ENCODE measurements at regions of chr2 and their contacts with region 1.

Region 1: GRCh38 chr2:54115284-54116137 is at the start of gene ACYP2:
- DNase-seq: peak; percentile 88
- H3K4me3 Mint-ChIP-seq: peak within 1 kb of the TSS; percentile 92
- H3K27ac Mint-ChIP-seq: peak within 1 kb of the TSS; percentile 97
- H3K4me1 Mint-ChIP-seq: peaks cover 14% of the 10 kb centered on the region
- H3K27me3 Mint-ChIP-seq: peaks cover 7% of the 10 kb centered on the region
- total RNA-seq, gene ACYP2: 5.2 and 5.9 TPM in 2 replicates

Region 2: DNA sequence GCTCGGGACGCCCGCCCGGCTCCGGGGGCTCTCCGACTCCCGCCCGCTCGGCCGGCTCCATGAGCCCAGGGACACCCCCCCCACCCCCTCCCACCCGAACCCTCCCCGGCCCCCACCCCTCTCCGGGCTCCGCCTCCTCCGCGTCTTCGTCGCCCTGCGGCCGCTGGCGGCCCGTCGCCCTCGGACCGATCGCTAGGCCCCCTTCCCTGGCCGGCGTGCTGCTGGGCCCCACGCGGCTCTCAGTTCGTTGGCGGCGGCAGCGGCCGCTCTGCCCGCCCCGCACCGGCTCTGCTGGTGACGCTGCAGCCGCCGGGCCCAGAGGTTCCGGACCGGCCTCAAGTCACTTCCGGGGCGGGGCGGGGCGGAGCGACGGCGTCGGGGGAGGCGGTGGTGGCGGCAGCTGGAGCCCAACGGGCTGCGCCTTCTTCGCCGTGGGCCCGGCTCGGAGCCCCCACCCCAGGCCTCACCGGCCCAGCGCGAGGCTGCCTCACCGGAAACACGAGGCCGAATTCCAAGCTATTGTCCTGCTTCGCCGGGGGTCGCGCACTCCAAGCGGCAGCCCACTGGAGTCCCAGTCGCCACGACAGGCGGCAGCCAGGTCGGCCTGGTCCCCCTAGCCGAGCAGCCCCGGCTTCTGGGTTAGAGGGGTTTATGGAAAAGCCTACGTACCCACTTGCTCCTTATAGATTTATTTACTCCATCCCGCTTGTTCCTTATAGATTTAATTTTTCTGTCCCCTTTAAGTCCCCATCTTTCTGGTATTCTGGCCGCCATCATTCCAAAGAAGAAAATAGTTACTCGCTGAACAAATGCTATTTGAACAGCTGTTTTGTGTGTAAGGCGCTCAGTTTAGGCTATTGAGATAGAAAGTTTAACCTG is 144.5 kb before region 1 on chr2 and contains the start of gene PSME4:
- intact Hi-C with region 1: loop called (anchors 1 kb)
- DNase-seq: peak; percentile 91
- H3K4me3 Mint-ChIP-seq: peak within 1 kb of the TSS; percentile 99
- H3K27ac Mint-ChIP-seq: peak within 1 kb of the TSS; percentile 99
- H3K4me1 Mint-ChIP-seq: peaks cover 39% of the 10 kb centered on the region
- H3K27me3 Mint-ChIP-seq: no peaks in the 10 kb centered on the region
- total RNA-seq, gene PSME4: 59.3 and 59.7 TPM in 2 replicates

Region 3: GRCh38 chr2:54052825-54053718 is 62.4 kb before region 1 on chr2:
- intact Hi-C with region 1: loop called (anchors 2 kb)
- DNase-seq: no peak
- H3K4me3 Mint-ChIP-seq: peak overlapping the region; percentile 40
- H3K27ac Mint-ChIP-seq: peak overlapping the region; percentile 64
- H3K4me1 Mint-ChIP-seq: peaks cover 20% of the 10 kb centered on the region
- H3K27me3 Mint-ChIP-seq: no peaks in the 10 kb centered on the region

Region 4: GRCh38 chr2:55232084-55232862 is 1116.8 kb after region 1 on chr2 and contains the starts of genes CLHC1 and RPS27A:
- intact Hi-C with region 1: loop called (anchors 1 kb)
- DNase-seq: peak; percentile 89
- H3K4me3 Mint-ChIP-seq: peak within 1 kb of the TSS; percentile 100
- H3K27ac Mint-ChIP-seq: peak within 1 kb of the TSS; percentile 97
- H3K4me1 Mint-ChIP-seq: peaks cover 63% of the 10 kb centered on the region
- H3K27me3 Mint-ChIP-seq: no peaks in the 10 kb centered on the region
- total RNA-seq, gene CLHC1: 9.0 and 12.3 TPM in 2 replicates
- total RNA-seq, gene RPS27A: 949 and 953 TPM in 2 replicates

Region 5: GRCh38 chr2:55693181-55694134 is 1577.9 kb after region 1 on chr2 and contains the start of gene PNPT1:
- intact Hi-C with region 1: loop called (anchors 5 kb)
- DNase-seq: peak; percentile 92
- H3K4me3 Mint-ChIP-seq: peak within 1 kb of the TSS; percentile 98
- H3K27ac Mint-ChIP-seq: peak within 1 kb of the TSS; percentile 89
- H3K4me1 Mint-ChIP-seq: peaks cover 39% of the 10 kb centered on the region
- H3K27me3 Mint-ChIP-seq: peaks cover 2% of the 10 kb centered on the region
- total RNA-seq, gene PNPT1: 65.1 and 71.1 TPM in 2 replicates